Testis (tissue), 5 donors: ENCODE measurements at regions of chr20 and their contacts with region 1.

Region 1: DNA sequence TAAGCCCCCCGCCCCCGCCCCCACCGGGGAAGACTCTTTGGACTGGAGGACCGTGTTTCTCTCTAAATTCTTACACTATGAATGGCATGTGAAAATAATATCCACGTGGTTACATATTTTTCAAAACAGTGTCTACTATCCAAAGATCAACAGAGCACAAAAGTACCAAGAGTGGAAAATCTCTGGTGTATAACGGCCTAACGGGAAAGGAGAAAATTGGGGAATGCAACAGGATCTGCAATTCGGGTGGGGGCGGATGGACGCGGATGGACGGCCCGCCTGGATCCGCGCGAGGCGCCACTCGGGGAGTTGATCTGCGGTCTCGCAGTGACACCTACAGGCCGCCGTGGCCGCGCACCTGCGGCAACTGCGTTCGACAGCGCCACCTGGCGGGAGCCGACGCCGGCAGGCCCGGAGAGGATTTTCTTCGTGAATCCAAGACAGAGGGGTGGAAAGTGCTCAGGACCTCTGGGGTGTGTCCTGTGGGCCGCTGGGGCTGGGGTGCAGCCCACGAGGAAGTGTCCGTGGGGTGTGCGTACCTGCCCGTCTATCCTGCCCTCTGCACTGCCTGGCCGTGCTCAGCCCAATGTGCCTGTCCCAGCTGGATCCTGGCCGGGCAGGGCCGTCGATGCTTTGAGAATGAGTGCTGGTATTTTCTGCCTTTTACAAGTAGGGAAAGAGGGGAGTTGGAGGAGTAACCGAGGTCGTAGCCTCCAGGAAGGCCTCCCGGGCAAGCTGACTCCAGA is 18.6 kb downstream of the ANKRD60 start:
- DNase-seq: peak; percentile 91
- H3K4me3 ChIP-seq: peak overlapping the region in 1 of 2 donors; percentile 9
- H3K27ac ChIP-seq: no peak overlapping the region
- H3K4me1 ChIP-seq: no peaks in the 10 kb centered on the region
- H3K27me3 ChIP-seq: no peaks in the 10 kb centered on the region
- CTCF ChIP-seq: peak; percentile 100
- POLR2A ChIP-seq: no peak

Region 2: GRCh38 chr20:57514273-57514751 is 695.5 kb before region 1 on chr20:
- intact Hi-C with region 1: loop called (anchors 10 kb)
- DNase-seq: peak; percentile 78
- H3K4me3 ChIP-seq: no peak overlapping the region
- H3K27ac ChIP-seq: no peak overlapping the region
- H3K4me1 ChIP-seq: no peaks in the 10 kb centered on the region
- H3K27me3 ChIP-seq: no peaks in the 10 kb centered on the region
- CTCF ChIP-seq: peak; percentile 71 to 78 (median 75)
- POLR2A ChIP-seq: no peak

Region 3: GRCh38 chr20:57560554-57561355 is 649.1 kb before region 1 on chr20 and contains the start of gene PCK1:
- intact Hi-C with region 1: no loop called
- DNase-seq: peak; percentile 82
- H3K4me3 ChIP-seq: no peak within 1 kb of the TSS
- H3K27ac ChIP-seq: no peak within 1 kb of the TSS
- H3K4me1 ChIP-seq: peaks cover 6% of the 10 kb centered on the region
- H3K27me3 ChIP-seq: no peaks in the 10 kb centered on the region
- CTCF ChIP-seq: no peak
- POLR2A ChIP-seq: no peak
- total RNA-seq, gene PCK1: 0.19 to 3.1 TPM

Region 4: DNA sequence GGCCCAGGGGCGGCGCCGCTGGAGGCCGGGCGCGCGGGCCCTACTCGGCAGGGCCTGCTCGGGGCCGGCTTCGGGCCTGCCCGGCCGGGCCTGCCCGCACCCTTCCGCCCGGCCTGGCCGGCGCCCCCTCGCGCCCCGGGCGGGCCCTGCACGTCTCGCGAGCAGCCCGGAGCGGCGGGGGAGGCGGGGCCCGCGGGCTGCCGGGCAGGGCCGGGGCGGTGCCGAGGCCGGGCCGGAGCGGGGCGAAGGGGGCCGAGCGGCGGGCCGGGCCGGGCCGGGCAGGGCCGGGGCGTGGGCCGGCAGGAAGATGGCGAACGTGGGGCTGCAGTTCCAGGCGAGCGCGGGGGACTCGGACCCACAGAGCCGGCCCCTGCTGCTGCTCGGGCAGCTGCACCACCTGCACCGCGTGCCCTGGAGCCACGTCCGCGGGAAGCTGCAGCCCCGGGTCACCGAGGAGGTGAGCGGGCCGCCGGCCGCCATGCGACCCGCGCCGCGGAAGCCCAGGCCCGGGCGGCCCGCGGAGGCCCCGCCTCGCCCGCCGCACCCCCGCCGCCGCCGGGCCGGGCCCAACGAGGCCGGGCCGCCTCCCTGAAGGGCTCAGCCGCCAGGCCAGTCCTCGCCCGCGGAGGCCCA is 482.9 kb after region 1 on chr20 and contains the start of gene NPEPL1:
- intact Hi-C with region 1: no loop called
- DNase-seq: peak; percentile 50
- H3K4me3 ChIP-seq: peak within 1 kb of the TSS; percentile 47 to 54
- H3K27ac ChIP-seq: peak within 1 kb of the TSS; percentile 69 to 93
- H3K4me1 ChIP-seq: peaks cover 24% of the 10 kb centered on the region
- H3K27me3 ChIP-seq: no peaks in the 10 kb centered on the region
- CTCF ChIP-seq: peak in 1 of 3 experiments; percentile 64
- POLR2A ChIP-seq: no peak
- total RNA-seq, gene NPEPL1: 56.3 to 79.9 TPM